ENCODE measurements at regions of chr7 and their contacts with region 1.

Region 1: DNA sequence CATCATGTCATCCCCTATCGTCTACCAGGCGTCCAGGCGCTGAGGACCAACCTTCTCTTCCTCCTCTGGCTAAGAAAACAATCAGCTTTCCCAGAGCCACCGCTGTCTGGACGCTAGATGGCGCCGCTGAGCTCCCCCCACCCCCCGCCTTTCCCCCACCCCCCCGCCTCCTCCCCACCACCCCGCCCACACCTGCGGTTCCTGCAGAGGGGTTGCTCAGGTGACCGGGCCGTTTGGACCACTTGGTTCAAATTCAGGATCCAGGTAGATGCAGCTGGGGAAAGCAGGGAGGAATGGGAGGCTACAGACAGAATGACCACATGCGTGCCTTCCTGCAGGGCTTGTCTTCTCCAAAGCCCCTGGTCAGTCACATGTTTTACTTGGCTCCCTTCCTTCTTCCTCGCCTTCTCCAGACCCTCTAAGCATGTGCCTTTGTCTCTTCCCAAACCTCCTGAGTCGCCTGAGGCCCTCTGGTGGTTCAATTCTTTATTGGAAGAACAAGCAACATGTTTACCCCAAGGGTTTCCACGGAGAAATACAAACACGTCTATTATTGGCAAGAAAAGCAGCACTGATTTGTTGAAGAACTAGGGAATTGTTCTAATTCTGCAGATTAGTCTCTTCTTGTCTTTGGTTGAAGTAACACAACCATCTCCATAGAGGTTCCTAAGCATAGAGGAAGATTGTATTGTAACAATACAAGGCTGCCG is 24.7 kb downstream of the AOC1 start:
- DNase-seq: no peak
- ATAC-seq: peak; percentile 86
- H3K4me3 ChIP-seq: 0 out of 4 replicates have a peak overlapping the region, but pooled peaks of 1 of the 2 experiments have one; percentile 2
- H3K27ac ChIP-seq: no peak overlapping the region
- H3K4me1 ChIP-seq: peaks cover 2% of the 10 kb centered on the region; the same call in 1 of the 2 replicates
- H3K27me3 ChIP-seq: peaks cover 10% of the 10 kb centered on the region
- CTCF ChIP-seq: peak; percentile 60

Region 2: GRCh38 chr7:149840722-149841121 is 1036.2 kb before region 1 on chr7:
- CTCF ChIA-PET with region 1: interaction called, 17 read pairs
- POLR2A ChIA-PET with region 1: no interaction called
- in situ Hi-C with region 1: no loop called
- intact Hi-C with region 1: no loop called
- DNase-seq: no peak
- ATAC-seq: no peak
- H3K4me3 ChIP-seq: no peak overlapping the region
- H3K27ac ChIP-seq: no peak overlapping the region
- H3K4me1 ChIP-seq: peaks cover 11% of the 10 kb centered on the region; the same call in 1 of the 2 replicates
- H3K27me3 ChIP-seq: no peaks in the 10 kb centered on the region
- CTCF ChIP-seq: no peak

Region 3: DNA sequence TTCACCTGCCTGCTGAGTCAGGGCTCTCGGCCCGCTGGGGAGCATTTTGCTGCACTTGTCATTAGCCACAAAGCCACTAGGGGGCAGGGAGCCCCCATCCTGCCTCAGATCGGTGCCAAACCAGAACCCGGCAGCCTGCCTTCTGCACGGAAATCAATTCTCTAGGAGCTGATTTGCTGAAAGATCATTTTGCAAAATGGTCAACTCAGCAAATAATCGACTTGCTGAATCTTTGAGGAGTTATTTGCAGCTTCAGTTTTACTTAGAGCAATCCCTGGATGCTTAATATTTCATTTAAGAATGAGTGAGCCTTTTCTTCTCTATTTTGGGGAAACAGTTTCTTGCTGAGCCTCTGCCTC is 428.2 kb before region 1 on chr7:
- CTCF ChIA-PET with region 1: no interaction called
- POLR2A ChIA-PET with region 1: no interaction called
- in situ Hi-C with region 1: no loop called
- intact Hi-C with region 1: loop called (anchors 5 kb)
- DNase-seq: peak; percentile 52
- ATAC-seq: peak; percentile 86
- H3K4me3 ChIP-seq: no peak overlapping the region
- H3K27ac ChIP-seq: no peak overlapping the region
- H3K4me1 ChIP-seq: no peaks in the 10 kb centered on the region; the same call in 1 of the 2 replicates
- H3K27me3 ChIP-seq: peaks cover 6% of the 10 kb centered on the region
- CTCF ChIP-seq: peak; percentile 97

Region 4: GRCh38 chr7:150538259-150538658 is 338.7 kb before region 1 on chr7:
- CTCF ChIA-PET with region 1: no interaction called
- POLR2A ChIA-PET with region 1: no interaction called
- in situ Hi-C with region 1: no loop called
- intact Hi-C with region 1: no loop called
- DNase-seq: no peak
- ATAC-seq: no peak
- H3K4me3 ChIP-seq: no peak overlapping the region
- H3K27ac ChIP-seq: no peak overlapping the region
- H3K4me1 ChIP-seq: no peaks in the 10 kb centered on the region
- H3K27me3 ChIP-seq: no peaks in the 10 kb centered on the region
- CTCF ChIP-seq: no peak

Region 5: GRCh38 chr7:150778738-150779301 is 98.2 kb before region 1 on chr7:
- CTCF ChIA-PET with region 1: no interaction called
- POLR2A ChIA-PET with region 1: no interaction called
- in situ Hi-C with region 1: no loop called
- intact Hi-C with region 1: loop called (anchors 5 kb)
- DNase-seq: peak; percentile 55
- ATAC-seq: peak; percentile 99
- H3K4me3 ChIP-seq: no peak overlapping the region
- H3K27ac ChIP-seq: no peak overlapping the region
- H3K4me1 ChIP-seq: peaks cover 3% of the 10 kb centered on the region; the same call in 1 of the 2 replicates
- H3K27me3 ChIP-seq: no peaks in the 10 kb centered on the region; the same call in none of the 2 replicates
- CTCF ChIP-seq: peak; percentile 94